ENCODE measurements at regions of chr6 and their contacts with region 1.

Region 1: DNA sequence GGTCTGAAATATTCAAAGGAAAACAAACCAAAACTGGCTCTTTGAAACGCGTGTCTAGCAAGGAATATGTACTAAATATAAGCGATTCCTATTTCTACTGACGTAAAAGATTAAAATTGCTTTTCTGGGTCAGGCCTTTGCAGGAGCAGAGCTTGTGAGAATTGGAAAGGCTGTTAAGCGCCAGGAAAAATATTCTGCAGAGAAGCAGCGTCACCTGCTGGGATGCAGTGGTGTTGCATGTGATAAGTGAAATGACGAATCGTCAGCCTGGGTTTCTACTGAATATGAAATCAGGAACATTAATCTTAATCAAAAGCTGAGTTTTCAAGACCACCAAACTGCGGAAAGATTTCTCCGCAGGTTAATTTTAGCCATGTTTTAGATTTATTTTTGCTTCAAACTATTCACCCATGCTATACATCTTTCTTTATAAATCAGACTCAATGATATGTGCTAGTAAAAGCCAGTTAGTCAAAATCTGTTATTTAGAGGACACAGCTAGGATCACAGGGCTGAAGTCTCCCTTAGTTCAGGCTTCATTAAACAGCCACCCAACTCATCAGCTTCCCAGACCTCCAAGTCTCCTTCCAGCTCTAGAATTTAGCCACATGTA is 67.4 kb downstream of the ALDH8A1 start:
- DNase-seq: peak; percentile 29 to 72
- H3K4me3 ChIP-seq: no peak overlapping the region
- H3K27ac ChIP-seq: no peak overlapping the region
- H3K4me1 ChIP-seq: no peaks in the 10 kb centered on the region
- H3K27me3 ChIP-seq: no peaks in the 10 kb centered on the region
- CTCF ChIP-seq: peak; percentile 72 to 89 (median 85)
- EP300 ChIP-seq: no peak
- POLR2A ChIP-seq: no peak
- RAD21 ChIP-seq: peak; percentile 96 to 97

Region 2: GRCh38 chr6:134698228-134698627 is 184.3 kb before region 1 on chr6:
- CTCF ChIA-PET with region 1: no interaction called
- POLR2A ChIA-PET with region 1: no interaction called
- DNase-seq: no peak
- H3K4me3 ChIP-seq: no peak overlapping the region
- H3K27ac ChIP-seq: no peak overlapping the region
- H3K4me1 ChIP-seq: no peaks in the 10 kb centered on the region
- H3K27me3 ChIP-seq: no peaks in the 10 kb centered on the region
- CTCF ChIP-seq: no peak
- EP300 ChIP-seq: no peak
- POLR2A ChIP-seq: no peak
- RAD21 ChIP-seq: no peak

Region 3: DNA sequence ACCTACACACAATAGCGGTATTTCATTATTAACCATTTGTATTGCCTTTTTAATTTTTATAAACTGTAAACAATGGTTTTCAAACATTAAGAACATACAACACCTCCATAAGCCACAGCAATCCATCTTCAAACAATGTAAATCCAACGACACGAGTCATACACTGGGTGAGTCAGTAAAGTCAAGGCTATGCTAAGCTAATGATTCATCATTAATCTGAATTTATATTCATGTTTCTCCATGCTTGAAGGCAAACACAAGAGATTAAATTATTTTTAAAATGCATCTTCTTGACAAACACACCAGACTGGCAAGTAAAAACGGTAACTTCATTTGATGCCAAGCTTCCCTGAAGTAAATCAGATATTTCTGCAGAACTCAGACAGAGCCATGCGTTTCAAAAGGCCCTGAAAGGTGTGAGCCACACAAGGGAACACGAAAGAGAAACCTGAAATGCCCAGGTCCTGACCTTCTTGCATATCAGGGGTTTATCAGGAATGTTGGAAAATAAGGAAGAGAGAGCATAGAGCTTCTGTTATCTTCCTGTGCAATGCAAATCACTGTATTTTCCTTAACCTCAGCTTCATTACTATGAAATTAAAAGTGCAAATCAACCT is 95.2 kb before region 1 on chr6:
- CTCF ChIA-PET with region 1: no interaction called
- POLR2A ChIA-PET with region 1: no interaction called
- DNase-seq: no peak
- H3K4me3 ChIP-seq: no peak overlapping the region
- H3K27ac ChIP-seq: no peak overlapping the region
- H3K4me1 ChIP-seq: no peaks in the 10 kb centered on the region
- H3K27me3 ChIP-seq: no peaks in the 10 kb centered on the region
- CTCF ChIP-seq: no peak
- EP300 ChIP-seq: no peak
- POLR2A ChIP-seq: no peak
- RAD21 ChIP-seq: no peak

Region 4: GRCh38 chr6:134870677-134871498 is 11.6 kb before region 1 on chr6:
- CTCF ChIA-PET with region 1: interaction called, 21 read pairs
- POLR2A ChIA-PET with region 1: no interaction called
- DNase-seq: no peak
- H3K4me3 ChIP-seq: no peak overlapping the region
- H3K27ac ChIP-seq: no peak overlapping the region
- H3K4me1 ChIP-seq: peaks cover 0 to 6% (median 3%) of the 10 kb centered on the region in 4 experiments; a peak in 2 of 7 replicates
- H3K27me3 ChIP-seq: no peaks in the 10 kb centered on the region
- CTCF ChIP-seq: no peak
- EP300 ChIP-seq: no peak
- POLR2A ChIP-seq: no peak
- RAD21 ChIP-seq: no peak

Region 5: DNA sequence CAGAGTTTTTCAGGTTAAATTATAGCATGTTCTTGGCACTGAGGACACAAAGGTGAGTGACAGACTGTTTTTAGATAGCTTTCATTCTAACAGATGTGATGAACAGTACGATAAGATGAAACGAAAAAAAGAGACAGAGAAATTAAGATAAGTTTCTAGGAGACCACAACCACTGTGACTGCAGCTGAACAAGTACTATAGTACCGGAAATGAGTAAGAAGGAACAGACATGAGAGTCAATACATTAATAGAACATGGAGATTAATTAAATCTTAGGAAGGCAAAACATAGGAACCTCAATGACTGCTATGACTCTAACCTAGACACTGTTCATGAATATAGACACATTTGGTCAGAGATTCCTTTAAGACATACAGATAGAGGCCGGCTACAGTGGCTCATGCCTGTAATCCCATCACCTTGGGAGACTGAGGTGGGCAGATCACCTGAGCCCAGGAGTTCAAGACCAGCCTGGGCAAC is 131.9 kb after region 1 on chr6:
- CTCF ChIA-PET with region 1: no interaction called
- POLR2A ChIA-PET with region 1: no interaction called
- DNase-seq: no peak
- H3K4me3 ChIP-seq: no peak overlapping the region
- H3K27ac ChIP-seq: no peak overlapping the region
- H3K4me1 ChIP-seq: no peaks in the 10 kb centered on the region
- H3K27me3 ChIP-seq: no peaks in the 10 kb centered on the region
- CTCF ChIP-seq: no peak
- EP300 ChIP-seq: no peak
- POLR2A ChIP-seq: no peak
- RAD21 ChIP-seq: no peak

Region 6: DNA sequence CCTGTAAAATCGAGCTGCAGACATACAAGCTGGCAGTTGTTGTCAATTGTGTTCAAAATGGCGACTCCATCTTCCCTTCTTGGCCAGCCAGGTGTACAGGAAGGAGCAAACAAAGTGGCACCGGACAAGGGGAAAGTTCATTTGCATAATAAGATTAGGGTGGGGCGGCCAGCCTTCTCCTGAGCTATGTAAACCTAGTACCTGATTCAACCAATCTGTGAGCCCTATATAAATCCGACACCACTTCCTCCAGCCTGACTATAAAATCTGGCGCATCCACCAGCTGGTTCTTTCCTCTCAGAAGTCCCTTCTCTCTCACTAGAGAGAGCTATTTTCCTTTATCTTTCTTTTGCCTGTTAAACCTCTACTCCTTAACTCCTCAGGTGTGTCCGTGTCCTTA is 180.2 kb after region 1 on chr6:
- CTCF ChIA-PET with region 1: no interaction called
- POLR2A ChIA-PET with region 1: no interaction called
- DNase-seq: no peak
- H3K4me3 ChIP-seq: no peak overlapping the region
- H3K27ac ChIP-seq: no peak overlapping the region
- H3K4me1 ChIP-seq: peaks cover 0 to 2% (median 0%) of the 10 kb centered on the region in 4 experiments; a peak in 1 of 7 replicates
- H3K27me3 ChIP-seq: no peaks in the 10 kb centered on the region
- CTCF ChIP-seq: no peak
- EP300 ChIP-seq: no peak
- POLR2A ChIP-seq: no peak
- RAD21 ChIP-seq: peak; percentile 7 to 17; a peak in 3 of 4 replicates

Measured in H1 (cell line).